ENCODE measurements at regions of chr17 and their contacts with region 1.

Region 1: DNA sequence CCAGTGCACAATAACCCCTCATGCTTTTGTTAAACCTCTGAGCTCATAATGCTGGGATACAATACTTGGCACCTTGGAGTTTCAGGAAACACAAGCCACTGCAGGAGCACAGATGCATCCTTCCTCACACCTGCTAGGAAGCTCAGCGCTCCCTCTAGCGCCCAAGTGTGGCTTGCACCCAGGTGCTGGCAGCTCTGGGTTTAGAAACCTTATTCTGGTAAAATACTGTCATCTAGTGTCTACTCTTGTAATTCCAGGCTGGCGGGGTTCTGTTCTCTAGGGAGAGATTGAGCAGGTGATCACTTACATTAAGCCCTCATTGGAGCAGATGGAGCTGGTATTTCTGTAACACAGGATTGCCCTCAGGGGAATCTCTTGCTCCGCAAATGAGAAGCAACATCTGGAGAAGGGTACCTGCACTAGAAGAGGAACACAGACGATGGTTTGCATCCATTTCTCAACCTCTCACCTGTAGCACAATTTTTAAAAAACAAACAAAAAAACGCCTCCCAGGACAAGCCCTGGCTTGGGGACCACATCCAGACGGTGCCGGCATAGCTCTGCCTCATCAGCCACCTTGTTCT is 1.5 kb downstream of the CCL1 start:
- DNase-seq: peak; percentile 87
- H3K4me3 Mint-ChIP-seq: no peak overlapping the region
- H3K27ac Mint-ChIP-seq: no peak overlapping the region
- H3K4me1 Mint-ChIP-seq: peaks cover 35% of the 10 kb centered on the region
- H3K27me3 Mint-ChIP-seq: peaks cover 57% of the 10 kb centered on the region

Region 2: GRCh38 chr17:33945646-33946546 is 415.7 kb before region 1 on chr17:
- CTCF ChIA-PET with region 1: no interaction called
- DNase-seq: no peak
- H3K4me3 Mint-ChIP-seq: no peak overlapping the region
- H3K27ac Mint-ChIP-seq: no peak overlapping the region
- H3K4me1 Mint-ChIP-seq: peaks cover 5% of the 10 kb centered on the region
- H3K27me3 Mint-ChIP-seq: peaks cover 22% of the 10 kb centered on the region

Region 3: GRCh38 chr17:34171245-34171818 is 190.2 kb before region 1 on chr17:
- CTCF ChIA-PET with region 1: interaction called, 52 read pairs
- DNase-seq: peak; percentile 69
- H3K4me3 Mint-ChIP-seq: no peak overlapping the region
- H3K27ac Mint-ChIP-seq: no peak overlapping the region
- H3K4me1 Mint-ChIP-seq: no peaks in the 10 kb centered on the region
- H3K27me3 Mint-ChIP-seq: peaks cover 4% of the 10 kb centered on the region

Region 4: GRCh38 chr17:34265711-34266110 is 95.9 kb before region 1 on chr17:
- CTCF ChIA-PET with region 1: interaction called, 10 read pairs
- DNase-seq: no peak
- H3K4me3 Mint-ChIP-seq: no peak overlapping the region
- H3K27ac Mint-ChIP-seq: no peak overlapping the region
- H3K4me1 Mint-ChIP-seq: no peaks in the 10 kb centered on the region
- H3K27me3 Mint-ChIP-seq: peaks cover 16% of the 10 kb centered on the region

Region 5: DNA sequence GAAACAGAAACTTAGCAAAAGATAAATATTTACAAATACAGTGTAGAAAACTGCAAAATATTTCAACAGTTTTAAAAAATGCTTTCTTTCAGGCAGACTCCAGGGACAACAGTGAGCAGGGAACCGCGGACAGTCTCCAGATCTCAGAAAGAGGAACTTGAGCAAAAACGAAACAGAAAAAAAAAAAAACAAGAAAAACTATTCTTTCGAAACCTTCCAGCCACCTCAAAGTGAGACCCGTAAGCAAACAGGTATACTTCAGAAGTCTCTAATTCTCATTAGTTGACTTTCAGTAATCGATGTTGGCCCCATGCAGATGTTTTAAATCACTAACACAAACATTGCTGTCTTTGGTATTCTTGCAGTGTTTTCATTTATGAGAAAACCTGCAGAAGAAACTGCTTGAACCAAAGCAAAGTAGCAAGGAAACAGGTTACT is 17.1 kb after region 1 on chr17:
- CTCF ChIA-PET with region 1: interaction called, 69 read pairs
- DNase-seq: peak; percentile 64
- H3K4me3 Mint-ChIP-seq: no peak overlapping the region
- H3K27ac Mint-ChIP-seq: peak overlapping the region; percentile 47
- H3K4me1 Mint-ChIP-seq: peaks cover 55% of the 10 kb centered on the region
- H3K27me3 Mint-ChIP-seq: peaks cover 11% of the 10 kb centered on the region

Region 6: GRCh38 chr17:34398990-34399389 is 37.4 kb after region 1 on chr17:
- CTCF ChIA-PET with region 1: interaction called, 15 read pairs
- DNase-seq: no peak
- H3K4me3 Mint-ChIP-seq: no peak overlapping the region
- H3K27ac Mint-ChIP-seq: no peak overlapping the region
- H3K4me1 Mint-ChIP-seq: peaks cover 22% of the 10 kb centered on the region
- H3K27me3 Mint-ChIP-seq: peaks cover 46% of the 10 kb centered on the region